ENCODE measurements at regions of chr6 and their contacts with region 1.

Region 1: DNA sequence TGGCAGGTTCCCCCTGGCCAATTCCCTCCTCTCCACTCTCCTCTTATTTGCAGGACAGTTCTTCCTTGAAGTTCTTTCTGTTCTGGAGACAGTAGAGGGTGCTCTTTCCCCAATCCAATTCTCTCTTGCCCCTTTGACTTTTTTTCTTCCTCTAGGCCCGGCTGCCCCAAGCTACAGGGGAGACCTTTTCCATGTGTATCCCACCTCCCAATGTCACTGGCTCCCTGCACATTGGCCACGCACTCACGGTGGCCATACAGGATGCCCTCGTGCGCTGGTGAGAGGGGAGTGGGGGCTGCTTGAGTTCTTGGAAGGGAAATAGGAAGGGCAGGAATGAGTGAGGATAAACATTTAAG is 1.5 kb downstream of the VARS2 start:
- DNase-seq: no peak
- ATAC-seq: peak; percentile 38
- H3K4me3 ChIP-seq: no peak overlapping the region
- H3K27ac ChIP-seq: no peak overlapping the region
- H3K4me1 ChIP-seq: no peaks in the 10 kb centered on the region
- H3K27me3 ChIP-seq: no peaks in the 10 kb centered on the region

Region 2: DNA sequence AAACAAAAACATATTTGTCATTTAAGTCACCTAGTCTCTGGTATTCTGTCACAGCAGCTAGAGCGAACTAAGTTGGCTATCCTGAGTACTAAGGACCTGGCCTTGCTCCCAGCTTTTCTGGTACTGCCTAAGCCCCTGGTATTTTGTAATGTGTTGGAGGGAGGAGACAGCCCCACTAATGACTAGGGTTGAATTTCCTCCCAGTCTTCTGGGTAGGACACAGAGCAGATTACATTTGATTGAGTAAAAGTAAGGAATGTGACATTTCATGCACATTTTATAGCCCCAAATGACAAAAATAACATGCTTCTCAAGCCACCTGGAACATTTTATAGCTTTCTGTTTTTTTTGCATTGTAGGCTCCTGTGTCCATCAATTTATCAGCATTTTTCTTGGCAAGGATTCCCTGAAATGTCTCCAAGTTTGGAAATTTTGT is 79.1 kb before region 1 on chr6:
- intact Hi-C with region 1: no loop called
- DNase-seq: peak in 1 of 2 donors; percentile 73
- ATAC-seq: peak; percentile 76
- H3K4me3 ChIP-seq: no peak overlapping the region
- H3K27ac ChIP-seq: peak overlapping the region in 1 of 2 donors; percentile 45
- H3K4me1 ChIP-seq: no peaks in the 10 kb centered on the region
- H3K27me3 ChIP-seq: no peaks in the 10 kb centered on the region

Region 3: DNA sequence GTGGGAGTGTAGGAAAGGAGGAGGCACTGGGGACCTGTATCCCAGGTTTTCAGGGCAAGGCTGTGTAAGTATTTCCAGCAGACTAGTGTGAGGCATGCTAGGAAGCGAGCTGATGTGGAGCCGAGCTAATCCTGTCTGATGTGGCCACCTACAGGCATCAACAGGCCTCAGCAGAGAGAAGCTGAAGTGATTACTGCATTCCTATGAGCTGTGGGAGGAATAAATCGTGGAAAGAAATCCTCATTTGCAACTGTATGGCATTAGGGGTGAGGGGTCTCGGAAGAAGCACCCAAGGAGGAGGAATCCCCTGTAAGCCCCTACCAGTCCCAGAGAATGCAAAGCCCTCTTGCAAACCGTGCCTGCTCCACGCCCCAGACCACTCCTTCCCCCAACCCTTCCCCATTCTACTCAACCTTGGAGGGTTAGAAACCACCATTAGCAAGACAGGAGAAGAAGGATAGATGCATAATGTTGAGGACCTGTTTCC is 155.2 kb after region 1 on chr6:
- intact Hi-C with region 1: loop called (anchors 5 kb)
- DNase-seq: no peak
- ATAC-seq: no peak
- H3K4me3 ChIP-seq: no peak overlapping the region
- H3K27ac ChIP-seq: no peak overlapping the region
- H3K4me1 ChIP-seq: no peaks in the 10 kb centered on the region
- H3K27me3 ChIP-seq: no peaks in the 10 kb centered on the region

Region 4: GRCh38 chr6:31079656-31080261 is 164.2 kb after region 1 on chr6:
- intact Hi-C with region 1: loop called (anchors 5 kb)
- DNase-seq: peak in 1 of 2 donors; percentile 65
- ATAC-seq: peak; percentile 75
- H3K4me3 ChIP-seq: no peak overlapping the region
- H3K27ac ChIP-seq: no peak overlapping the region
- H3K4me1 ChIP-seq: no peaks in the 10 kb centered on the region
- H3K27me3 ChIP-seq: no peaks in the 10 kb centered on the region

Region 5: GRCh38 chr6:31087494-31088089 is 172.0 kb after region 1 on chr6:
- intact Hi-C with region 1: loop called in 1 of 2 experiments (anchors 5 kb)
- DNase-seq: peak; percentile 91 to 95
- ATAC-seq: peak; percentile 92
- H3K4me3 ChIP-seq: no peak overlapping the region
- H3K27ac ChIP-seq: no peak overlapping the region
- H3K4me1 ChIP-seq: no peaks in the 10 kb centered on the region
- H3K27me3 ChIP-seq: no peaks in the 10 kb centered on the region

Measured in aorta (tissue), 5 donors.